ENCODE measurements at regions of chr7 and their contacts with region 1.

Region 1: GRCh38 chr7:41292487-41292886 is 410.4 kb downstream of the INHBA start:
- DNase-seq: peak; percentile 93
- ATAC-seq: peak; percentile 99
- H3K4me3 ChIP-seq: no peak overlapping the region
- H3K27ac ChIP-seq: peak overlapping the region; percentile 28
- H3K4me1 ChIP-seq: peaks cover 15% of the 10 kb centered on the region
- H3K27me3 ChIP-seq: no peaks in the 10 kb centered on the region
- CTCF ChIP-seq: no peak

Region 2: DNA sequence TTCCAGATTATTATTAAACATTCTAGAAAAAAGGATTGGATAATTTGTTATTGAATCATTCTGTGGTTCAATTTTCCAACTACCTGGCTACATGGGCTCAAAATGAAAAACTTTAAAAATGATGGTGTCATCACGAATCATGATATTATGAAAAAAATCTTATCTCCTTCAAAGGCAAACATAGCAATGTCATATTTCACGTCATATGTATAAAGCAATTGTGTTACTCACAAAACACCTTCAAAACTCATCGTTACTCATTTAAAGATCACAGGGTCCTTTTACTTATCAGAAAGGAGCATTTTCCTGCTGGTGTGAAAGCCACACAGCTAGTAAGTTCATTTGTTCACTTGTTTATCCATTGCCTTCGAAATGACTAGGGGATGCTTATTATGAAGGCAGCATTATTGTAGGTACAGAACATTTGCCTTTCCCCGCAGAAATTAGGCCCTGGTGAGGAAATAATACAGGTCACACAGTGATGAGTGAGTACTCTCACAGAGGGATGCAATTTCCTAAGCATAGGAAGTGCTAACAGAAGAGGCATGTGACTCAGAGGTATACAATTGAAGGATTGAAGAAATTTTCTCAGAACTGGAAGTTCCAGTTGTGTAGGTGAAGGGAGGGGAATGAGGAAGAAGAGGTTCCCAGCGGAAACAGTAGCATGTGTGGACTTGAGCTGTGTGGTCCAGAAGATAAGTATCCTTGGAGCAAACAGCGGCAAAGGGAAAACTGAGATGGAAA is 68.3 kb before region 1 on chr7:
- CTCF ChIA-PET with region 1: no interaction called
- POLR2A ChIA-PET with region 1: no interaction called
- intact Hi-C with region 1: loop called (anchors 2 kb)
- DNase-seq: peak; percentile 98
- ATAC-seq: peak; percentile 85
- H3K4me3 ChIP-seq: no peak overlapping the region
- H3K27ac ChIP-seq: peak overlapping the region; percentile 98
- H3K4me1 ChIP-seq: peaks cover 38% of the 10 kb centered on the region
- H3K27me3 ChIP-seq: no peaks in the 10 kb centered on the region
- CTCF ChIP-seq: no peak

Region 3: GRCh38 chr7:41425926-41426325 is 133.4 kb after region 1 on chr7:
- CTCF ChIA-PET with region 1: no interaction called
- POLR2A ChIA-PET with region 1: no interaction called
- intact Hi-C with region 1: loop called (anchors 5 kb)
- DNase-seq: peak; percentile 89
- ATAC-seq: peak; percentile 98
- H3K4me3 ChIP-seq: no peak overlapping the region
- H3K27ac ChIP-seq: peak overlapping the region; percentile 86
- H3K4me1 ChIP-seq: peaks cover 22% of the 10 kb centered on the region
- H3K27me3 ChIP-seq: no peaks in the 10 kb centered on the region
- CTCF ChIP-seq: no peak

Measured in PC-3 (cell line).